ENCODE measurements at regions of chr7 and their contacts with region 1.

Region 1: GRCh38 chr7:424961-425793 is 94.5 kb downstream of the PDGFA start:
- DNase-seq: no peak
- ATAC-seq: no peak
- H3K4me3 ChIP-seq: no peak overlapping the region
- H3K27ac ChIP-seq: no peak overlapping the region
- H3K4me1 ChIP-seq: peaks cover 10% of the 10 kb centered on the region
- H3K27me3 ChIP-seq: peaks cover 20 to 53% of the 10 kb centered on the region in 2 experiments; a peak in 4 of 5 replicates
- CTCF ChIP-seq: no peak
- EP300 ChIP-seq: no peak
- POLR2A ChIP-seq: no peak
- RAD21 ChIP-seq: no peak

Region 2: DNA sequence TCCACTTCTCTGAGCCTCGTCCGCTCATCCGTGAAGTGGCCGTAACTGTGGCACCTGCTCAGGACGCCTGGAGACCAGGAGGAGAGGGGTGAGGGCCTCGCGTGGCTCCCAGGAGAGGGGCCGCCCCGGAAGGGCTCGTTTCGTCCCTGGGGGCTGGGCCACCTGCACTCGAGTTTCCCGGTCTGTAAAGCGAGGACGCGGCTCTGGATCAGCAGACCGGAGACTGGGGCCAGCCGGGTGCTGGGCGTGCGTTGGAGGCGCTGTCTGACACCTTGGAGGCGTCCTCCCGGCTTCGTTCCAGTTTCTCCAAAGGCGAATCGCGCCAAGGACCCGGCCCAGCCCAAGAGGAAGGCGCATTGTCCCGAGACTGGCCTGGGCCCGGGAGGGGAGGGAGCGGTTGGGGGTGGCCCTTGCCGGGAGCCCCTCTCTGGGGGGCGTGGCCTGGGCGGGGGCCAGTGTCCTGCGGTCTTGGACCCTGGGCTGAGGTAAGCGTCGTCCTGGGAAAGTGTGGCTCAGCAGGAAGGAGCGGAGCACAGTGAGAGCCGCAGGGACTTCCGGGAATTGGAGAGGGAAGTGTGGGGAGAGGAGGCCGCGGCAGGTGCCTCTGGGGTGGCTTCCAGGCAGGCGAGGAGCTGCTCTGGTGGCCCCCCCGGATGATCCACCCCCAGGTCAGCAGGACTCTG is 45.6 kb before region 1 on chr7:
- CTCF ChIA-PET with region 1: no interaction called
- POLR2A ChIA-PET with region 1: no interaction called
- in situ Hi-C with region 1: no loop called
- intact Hi-C with region 1: loop called (anchors 10 kb)
- DNase-seq: no peak
- ATAC-seq: no peak
- H3K4me3 ChIP-seq: no peak overlapping the region; a peak in 1 of 6 replicates
- H3K27ac ChIP-seq: no peak overlapping the region
- H3K4me1 ChIP-seq: peaks cover 29% of the 10 kb centered on the region
- H3K27me3 ChIP-seq: peaks cover 2 to 26% of the 10 kb centered on the region in 2 experiments; a peak in 3 of 5 replicates
- CTCF ChIP-seq: no peak
- EP300 ChIP-seq: no peak
- POLR2A ChIP-seq: no peak
- RAD21 ChIP-seq: no peak